K562 (cell line): ENCODE measurements at regions of chr20 and their contacts with region 1.

Region 1: DNA sequence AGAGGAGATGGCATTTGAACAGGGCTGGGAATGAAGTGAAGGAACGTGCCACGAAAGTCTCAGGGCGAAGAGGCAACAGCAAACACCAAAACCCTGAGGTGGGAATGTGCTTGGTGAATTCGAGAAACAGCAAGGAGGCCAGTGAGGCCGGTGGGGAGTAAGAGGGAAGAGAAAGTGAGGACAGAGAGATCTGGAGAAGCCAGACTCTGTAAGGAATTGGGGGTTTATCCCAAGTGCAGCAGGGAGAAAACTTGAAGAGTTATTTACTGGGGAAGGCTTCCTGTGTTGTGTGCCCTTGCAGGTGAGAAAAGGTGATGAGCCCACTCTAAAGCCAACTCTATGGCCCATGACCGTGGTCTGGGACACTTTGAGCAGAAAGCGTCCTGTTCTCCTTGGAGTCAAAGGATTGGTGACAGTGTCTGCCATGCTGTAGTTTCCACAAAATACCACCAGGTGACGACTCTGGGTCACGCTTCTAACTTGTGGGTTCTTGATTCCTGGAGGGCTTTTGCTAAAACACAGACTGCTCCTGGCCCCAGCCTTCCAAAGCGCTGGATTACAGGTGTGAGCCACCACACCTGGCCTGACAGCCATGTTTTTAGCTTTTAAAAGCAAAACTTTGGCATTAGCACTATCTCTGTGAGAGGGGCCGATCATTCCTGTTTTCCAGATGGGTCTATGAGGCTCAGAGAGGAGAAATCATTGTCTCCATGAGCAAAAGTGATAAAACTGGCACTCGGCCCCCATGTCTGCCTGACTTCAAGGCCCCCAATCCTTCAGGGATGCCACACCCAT is 18.0 kb upstream of the CSNK2A1 start:
- DNase-seq: peak; percentile 48 to 81 (median 59)
- ATAC-seq: peak; percentile 91
- H3K4me3 ChIP-seq: no peak overlapping the region
- H3K27ac ChIP-seq: no peak overlapping the region
- H3K4me1 ChIP-seq: peaks cover 0 to 15% of the 10 kb centered on the region in 2 experiments; a peak in 3 of 5 replicates
- H3K27me3 ChIP-seq: no peaks in the 10 kb centered on the region
- CTCF ChIP-seq: peak; percentile 89 to 96 (median 91)
- EP300 ChIP-seq: no peak
- POLR2A ChIP-seq: no peak
- RAD21 ChIP-seq: peak; percentile 89 to 95

Region 2: GRCh38 chr20:645318-646106 is 83.9 kb after region 1 on chr20:
- CTCF ChIA-PET with region 1: interaction called, 17 read pairs
- POLR2A ChIA-PET with region 1: no interaction called
- in situ Hi-C with region 1: loop called (anchors 5 kb)
- intact Hi-C with region 1: loop called (anchors 1 kb)
- DNase-seq: peak; percentile 57 to 82 (median 70)
- ATAC-seq: peak; percentile 87
- H3K4me3 ChIP-seq: no peak overlapping the region
- H3K27ac ChIP-seq: peak overlapping the region; percentile 67; the same call in 2 of the 3 replicates
- H3K4me1 ChIP-seq: peaks cover 18 to 19% of the 10 kb centered on the region in 2 experiments; a peak in 4 of 5 replicates
- H3K27me3 ChIP-seq: no peaks in the 10 kb centered on the region
- CTCF ChIP-seq: peak; percentile 83 to 90 (median 87)
- EP300 ChIP-seq: no peak
- POLR2A ChIP-seq: 0 out of 2 replicates have a peak, but pooled peaks have one; percentile 37
- RAD21 ChIP-seq: peak; percentile 85 to 86

Region 3: DNA sequence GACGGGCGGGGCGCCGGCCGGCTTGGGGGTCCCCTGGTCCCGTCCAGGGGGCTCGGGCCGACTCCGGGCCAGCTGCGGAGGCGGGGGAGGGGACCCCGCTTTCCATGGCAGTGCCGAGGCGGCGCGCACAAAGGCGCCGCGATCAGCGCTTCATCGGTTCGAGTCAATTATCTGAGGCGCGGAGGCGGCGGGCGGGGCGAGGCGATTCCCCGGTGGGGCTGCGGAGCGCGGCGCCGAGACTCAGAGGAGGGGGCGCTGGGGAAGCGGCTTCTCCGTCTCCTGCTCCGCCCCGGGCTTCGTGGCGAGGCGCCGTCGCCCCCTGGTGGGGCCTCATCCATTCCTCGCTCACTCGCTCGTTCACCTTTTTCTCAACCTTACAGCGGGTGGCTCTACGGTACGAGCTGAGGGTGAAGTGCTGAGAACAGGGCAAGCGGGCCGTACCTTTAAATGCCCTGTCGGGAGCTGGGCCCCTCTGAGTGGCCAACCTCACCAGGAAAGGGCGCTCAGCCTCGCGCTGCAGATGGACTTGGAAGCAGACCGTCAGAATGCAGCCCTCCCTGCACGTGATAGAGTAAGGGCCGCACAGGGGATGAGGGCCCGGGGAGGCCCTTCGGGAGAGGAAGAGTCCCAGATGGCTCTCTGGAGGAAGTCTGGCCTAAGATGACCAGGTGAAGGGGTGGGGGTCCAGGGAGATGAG is 166.8 kb after region 1 on chr20:
- CTCF ChIA-PET with region 1: interaction called, 8 read pairs
- POLR2A ChIA-PET with region 1: no interaction called
- in situ Hi-C with region 1: no loop called
- intact Hi-C with region 1: loop called (anchors 2 kb)
- DNase-seq: peak; percentile 84 to 88 (median 87)
- ATAC-seq: peak; percentile 99
- H3K4me3 ChIP-seq: peak overlapping the region; percentile 61
- H3K27ac ChIP-seq: peak overlapping the region; percentile 74
- H3K4me1 ChIP-seq: peaks cover 5 to 18% of the 10 kb centered on the region in 2 experiments; a peak in 4 of 5 replicates
- H3K27me3 ChIP-seq: no peaks in the 10 kb centered on the region
- CTCF ChIP-seq: peak; percentile 76 to 92 (median 86)
- EP300 ChIP-seq: no peak
- POLR2A ChIP-seq: no peak
- RAD21 ChIP-seq: peak; percentile 95 to 96

Region 4: GRCh38 chr20:740141-740540 is 178.5 kb after region 1 on chr20:
- CTCF ChIA-PET with region 1: interaction called, 13 read pairs
- POLR2A ChIA-PET with region 1: no interaction called
- in situ Hi-C with region 1: loop called (anchors 5 kb)
- intact Hi-C with region 1: loop called (anchors 1 kb)
- DNase-seq: no peak
- ATAC-seq: no peak
- H3K4me3 ChIP-seq: no peak overlapping the region
- H3K27ac ChIP-seq: no peak overlapping the region
- H3K4me1 ChIP-seq: peaks cover 0 to 7% of the 10 kb centered on the region in 2 experiments; a peak in 2 of 5 replicates
- H3K27me3 ChIP-seq: no peaks in the 10 kb centered on the region
- CTCF ChIP-seq: no peak
- EP300 ChIP-seq: no peak
- POLR2A ChIP-seq: no peak
- RAD21 ChIP-seq: no peak

Region 5: GRCh38 chr20:768426-768978 is 206.9 kb after region 1 on chr20 and contains the start of gene SLC52A3:
- CTCF ChIA-PET with region 1: interaction called, 3 read pairs
- POLR2A ChIA-PET with region 1: no interaction called
- in situ Hi-C with region 1: no loop called
- intact Hi-C with region 1: loop called (anchors 1 kb)
- DNase-seq: peak; percentile 45 to 62 (median 54)
- ATAC-seq: peak; percentile 96
- H3K4me3 ChIP-seq: no peak within 1 kb of the TSS
- H3K27ac ChIP-seq: no peak within 1 kb of the TSS
- H3K4me1 ChIP-seq: peaks cover 0 to 3% of the 10 kb centered on the region in 2 experiments; a peak in 4 of 5 replicates
- H3K27me3 ChIP-seq: peaks cover 0 to 7% of the 10 kb centered on the region in 2 experiments; a peak in 2 of 5 replicates
- CTCF ChIP-seq: peak; percentile 71 to 76 (median 74)
- EP300 ChIP-seq: no peak
- POLR2A ChIP-seq: no peak
- RAD21 ChIP-seq: peak; percentile 42 to 68; a peak in 3 of 4 replicates
- polyA plus RNA-seq, gene SLC52A3: 0.06 to 0.07 TPM